ENCODE measurements at regions of chr15 and their contacts with region 1.

Region 1: GRCh38 chr15:81265944-81266775 is 57.8 kb downstream of the STARD5 start:
- DNase-seq: peak; percentile 80
- ATAC-seq: peak; percentile 91
- H3K4me3 ChIP-seq: no peak overlapping the region
- H3K27ac ChIP-seq: no peak overlapping the region
- H3K4me1 ChIP-seq: peaks cover 7% of the 10 kb centered on the region
- H3K27me3 ChIP-seq: no peaks in the 10 kb centered on the region
- CTCF ChIP-seq: peak; percentile 97
- POLR2A ChIP-seq: no peak
- RAD21 ChIP-seq: peak; percentile 97

Region 2: DNA sequence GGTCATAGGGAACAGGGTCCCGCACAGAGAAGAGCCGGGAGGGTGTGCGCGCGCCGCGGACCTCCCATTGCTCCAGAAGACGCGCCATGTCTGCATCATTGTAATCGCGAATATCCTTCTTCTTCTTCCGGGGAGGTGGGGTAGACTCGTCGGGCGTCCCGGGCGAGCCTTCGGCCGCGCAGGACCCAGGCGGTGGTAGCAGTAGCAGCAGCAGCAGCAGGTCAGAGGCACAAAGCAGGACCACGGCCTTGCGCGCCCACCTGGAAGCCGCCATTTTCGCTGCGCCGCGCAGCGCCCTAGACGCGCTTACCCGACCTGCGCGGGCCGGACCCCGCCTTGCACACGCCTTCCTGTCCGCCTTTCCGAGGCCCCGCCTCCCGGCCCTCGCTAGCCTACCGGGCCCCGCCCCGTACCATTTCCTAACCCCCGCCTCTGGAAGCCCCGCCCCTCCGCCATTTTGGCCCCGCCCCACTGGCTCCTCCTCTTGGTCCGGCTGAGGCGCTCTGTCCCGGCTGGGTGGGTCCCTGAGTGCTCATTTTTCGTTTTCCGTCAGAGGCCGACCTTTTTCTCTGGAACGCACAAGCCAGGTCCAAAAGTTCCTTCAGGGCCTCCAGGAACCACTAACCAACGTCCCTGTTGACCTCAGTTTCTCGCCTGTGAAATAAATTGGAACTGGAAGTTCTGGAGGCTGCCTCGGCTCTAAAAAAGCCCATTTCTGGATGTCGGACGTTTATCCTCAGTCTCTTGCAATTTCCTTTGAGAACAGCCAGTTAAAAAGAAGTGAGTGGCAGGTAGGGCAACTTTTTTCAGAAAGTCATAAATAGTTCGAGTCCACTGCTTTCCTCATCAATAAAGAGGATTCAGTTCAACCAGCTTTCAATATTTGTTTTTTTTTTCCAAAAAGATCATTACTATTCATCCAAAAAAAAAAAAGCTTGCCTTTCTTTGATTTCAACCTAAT is 276.4 kb before region 1 on chr15 and contains the start of gene MESD:
- CTCF ChIA-PET with region 1: interaction called, 8 read pairs
- POLR2A ChIA-PET with region 1: no interaction called
- dilution Hi-C with region 1: no loop called
- in situ Hi-C with region 1: loop called (anchors 10 kb)
- intact Hi-C with region 1: no loop called
- DNase-seq: peak; percentile 92
- ATAC-seq: peak; percentile 98
- H3K4me3 ChIP-seq: peak within 1 kb of the TSS; percentile 73
- H3K27ac ChIP-seq: peak within 1 kb of the TSS; percentile 98
- H3K4me1 ChIP-seq: peaks cover 6% of the 10 kb centered on the region
- H3K27me3 ChIP-seq: no peaks in the 10 kb centered on the region
- CTCF ChIP-seq: no peak
- POLR2A ChIP-seq: peak; percentile 73
- RAD21 ChIP-seq: no peak
- total RNA-seq, gene MESD: 10.0 and 15.3 TPM in 2 replicates

Region 3: DNA sequence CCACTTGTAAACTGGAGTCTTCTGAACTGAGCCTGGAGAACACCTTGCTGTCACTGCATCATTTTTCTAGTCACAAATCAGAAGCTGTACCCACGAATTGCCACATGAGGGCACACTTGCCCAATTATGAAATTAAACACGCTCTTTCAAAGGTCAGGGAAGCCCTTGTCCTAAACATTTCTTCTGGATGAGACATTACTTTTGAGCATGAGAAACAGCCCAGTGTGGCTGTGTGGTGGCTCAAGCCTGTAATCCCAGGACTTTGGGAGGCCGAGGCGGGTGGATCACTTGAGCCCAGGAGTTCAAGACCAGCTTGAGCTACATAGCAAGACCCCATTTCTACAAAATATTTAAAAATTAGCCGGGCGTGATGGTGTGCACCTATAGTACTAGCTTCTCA is 159.6 kb before region 1 on chr15:
- CTCF ChIA-PET with region 1: interaction called, 55 read pairs
- POLR2A ChIA-PET with region 1: no interaction called
- dilution Hi-C with region 1: no loop called
- in situ Hi-C with region 1: loop called (anchors 5 kb)
- intact Hi-C with region 1: loop called (anchors 1 kb)
- DNase-seq: peak; percentile 87
- ATAC-seq: peak; percentile 96
- H3K4me3 ChIP-seq: no peak overlapping the region
- H3K27ac ChIP-seq: no peak overlapping the region
- H3K4me1 ChIP-seq: 0 out of 2 replicates have a peak, but pooled peaks cover 3% of the 10 kb centered on the region
- H3K27me3 ChIP-seq: no peaks in the 10 kb centered on the region
- CTCF ChIP-seq: peak; percentile 90
- POLR2A ChIP-seq: no peak
- RAD21 ChIP-seq: peak; percentile 88

Region 4: GRCh38 chr15:81146006-81146405 is 120.2 kb before region 1 on chr15:
- CTCF ChIA-PET with region 1: interaction called, 10 read pairs
- POLR2A ChIA-PET with region 1: no interaction called
- dilution Hi-C with region 1: no loop called
- in situ Hi-C with region 1: no loop called
- intact Hi-C with region 1: no loop called
- DNase-seq: no peak
- ATAC-seq: peak; percentile 51; the same call in 1 of the 2 replicates
- H3K4me3 ChIP-seq: no peak overlapping the region
- H3K27ac ChIP-seq: no peak overlapping the region
- H3K4me1 ChIP-seq: no peaks in the 10 kb centered on the region
- H3K27me3 ChIP-seq: peaks cover 11% of the 10 kb centered on the region
- CTCF ChIP-seq: no peak
- POLR2A ChIP-seq: no peak
- RAD21 ChIP-seq: no peak

Region 5: DNA sequence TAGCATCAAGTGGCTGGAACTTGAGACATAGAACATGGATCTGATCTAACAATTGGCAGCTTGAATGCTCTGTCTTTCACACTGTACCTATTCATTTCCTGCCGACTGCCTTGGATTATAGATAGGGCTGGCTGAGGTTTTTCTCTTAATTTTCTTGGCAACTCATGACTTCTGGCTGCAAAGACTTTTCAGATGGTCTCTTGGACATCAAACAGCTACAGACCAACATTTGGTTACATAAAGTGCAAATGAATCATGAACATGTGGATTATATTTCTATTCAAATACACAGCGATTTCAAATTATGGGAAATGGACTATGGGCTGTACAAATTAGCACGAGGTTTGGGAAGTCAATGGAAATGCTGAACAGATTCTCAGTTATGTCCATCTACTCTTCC is 95.6 kb before region 1 on chr15:
- CTCF ChIA-PET with region 1: interaction called, 13 read pairs
- POLR2A ChIA-PET with region 1: no interaction called
- dilution Hi-C with region 1: no loop called
- in situ Hi-C with region 1: no loop called
- intact Hi-C with region 1: no loop called
- DNase-seq: no peak
- ATAC-seq: no peak
- H3K4me3 ChIP-seq: no peak overlapping the region
- H3K27ac ChIP-seq: no peak overlapping the region
- H3K4me1 ChIP-seq: peaks cover 5% of the 10 kb centered on the region
- H3K27me3 ChIP-seq: no peaks in the 10 kb centered on the region
- CTCF ChIP-seq: no peak
- POLR2A ChIP-seq: no peak
- RAD21 ChIP-seq: no peak

Region 6: GRCh38 chr15:81284256-81285031 is 18.3 kb after region 1 on chr15:
- CTCF ChIA-PET with region 1: interaction called, 13 read pairs
- POLR2A ChIA-PET with region 1: no interaction called
- dilution Hi-C with region 1: no loop called
- in situ Hi-C with region 1: no loop called
- intact Hi-C with region 1: no loop called
- DNase-seq: no peak
- ATAC-seq: no peak
- H3K4me3 ChIP-seq: no peak overlapping the region
- H3K27ac ChIP-seq: no peak overlapping the region
- H3K4me1 ChIP-seq: no peaks in the 10 kb centered on the region; the same call in 1 of the 2 replicates
- H3K27me3 ChIP-seq: no peaks in the 10 kb centered on the region
- CTCF ChIP-seq: no peak
- POLR2A ChIP-seq: no peak
- RAD21 ChIP-seq: no peak

Measured in IMR-90 (cell line).